Aorta (tissue), 5 donors: ENCODE measurements at regions of chr11 and their contacts with region 1.

Region 1: GRCh38 chr11:108497317-108498045 is 703 bp downstream of the POGLUT3 start:
- DNase-seq: peak; percentile 95
- ATAC-seq: peak; percentile 95
- H3K4me3 ChIP-seq: peak overlapping the region; percentile 63
- H3K27ac ChIP-seq: peak overlapping the region; percentile 90 to 96
- H3K4me1 ChIP-seq: peaks cover 0 to 2% of the 10 kb centered on the region in 2 donors
- H3K27me3 ChIP-seq: no peaks in the 10 kb centered on the region

Region 2: GRCh38 chr11:108222686-108223448 is 274.6 kb before region 1 on chr11 and contains the start of gene ATM:
- intact Hi-C with region 1: loop called in 1 of 2 experiments (anchors 10 kb)
- DNase-seq: peak; percentile 100
- ATAC-seq: peak; percentile 99
- H3K4me3 ChIP-seq: peak within 1 kb of the TSS; percentile 77 to 94
- H3K27ac ChIP-seq: peak within 1 kb of the TSS; percentile 67 to 95
- H3K4me1 ChIP-seq: peaks cover 2 to 13% of the 10 kb centered on the region in 2 donors
- H3K27me3 ChIP-seq: no peaks in the 10 kb centered on the region
- total RNA-seq, gene ATM: 66.3 to 123 TPM

Region 3: DNA sequence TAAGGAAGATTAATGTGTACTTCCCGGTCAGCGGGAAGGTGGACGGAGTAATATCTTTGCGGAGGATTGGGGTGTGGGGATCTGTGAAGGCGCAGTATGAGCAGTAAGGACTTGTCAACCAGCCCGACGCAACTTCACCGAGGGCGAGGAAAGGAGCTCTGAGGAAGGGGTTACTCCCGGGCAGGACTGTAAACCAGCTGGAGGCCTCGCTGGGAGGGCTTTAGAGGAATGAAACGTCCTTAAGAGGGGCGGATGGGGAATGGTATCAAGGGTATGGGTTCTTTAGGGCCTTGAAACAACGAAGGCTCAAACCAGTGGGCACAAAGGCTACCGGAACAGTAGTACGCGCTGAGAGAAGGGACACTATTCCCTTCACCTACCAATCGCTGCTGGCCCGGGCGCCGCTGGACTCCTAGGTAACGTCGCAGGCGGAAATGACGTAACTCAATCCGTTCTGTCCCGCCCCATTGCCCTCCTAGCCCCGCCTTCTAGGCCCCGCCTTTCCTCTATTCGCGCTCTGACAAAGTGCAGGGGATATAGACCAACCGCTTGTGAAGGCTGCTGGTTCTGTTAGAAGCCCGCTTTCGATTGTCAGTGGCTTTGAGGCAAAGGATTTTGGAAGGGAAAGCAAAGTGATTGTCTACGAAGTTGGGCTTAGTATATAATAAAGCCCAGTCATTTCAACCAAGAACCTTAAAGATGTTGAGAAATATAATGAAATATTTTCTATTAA is 30.2 kb before region 1 on chr11 and contains the start of gene C11orf65:
- intact Hi-C with region 1: loop called in 1 of 2 experiments (anchors 2 kb)
- DNase-seq: peak; percentile 96 to 98
- ATAC-seq: peak; percentile 100
- H3K4me3 ChIP-seq: peak within 1 kb of the TSS; percentile 22 to 41
- H3K27ac ChIP-seq: peak within 1 kb of the TSS; percentile 91 to 94
- H3K4me1 ChIP-seq: peaks cover 0 to 2% of the 10 kb centered on the region in 2 donors
- H3K27me3 ChIP-seq: no peaks in the 10 kb centered on the region
- total RNA-seq, gene C11orf65: 0.36 TPM in 1 of 2 donors, not detected in the other

Region 4: GRCh38 chr11:108593214-108593922 is 95.9 kb after region 1 on chr11 and contains the start of gene EXPH5:
- intact Hi-C with region 1: loop called in 1 of 2 experiments (anchors 5 kb)
- DNase-seq: peak; percentile 85 to 94
- ATAC-seq: peak; percentile 93
- H3K4me3 ChIP-seq: peak within 1 kb of the TSS; percentile 72 to 79
- H3K27ac ChIP-seq: no peak within 1 kb of the TSS
- H3K4me1 ChIP-seq: no peaks in the 10 kb centered on the region
- H3K27me3 ChIP-seq: no peaks in the 10 kb centered on the region
- total RNA-seq, gene EXPH5: 1.8 to 4.5 TPM

Region 5: DNA sequence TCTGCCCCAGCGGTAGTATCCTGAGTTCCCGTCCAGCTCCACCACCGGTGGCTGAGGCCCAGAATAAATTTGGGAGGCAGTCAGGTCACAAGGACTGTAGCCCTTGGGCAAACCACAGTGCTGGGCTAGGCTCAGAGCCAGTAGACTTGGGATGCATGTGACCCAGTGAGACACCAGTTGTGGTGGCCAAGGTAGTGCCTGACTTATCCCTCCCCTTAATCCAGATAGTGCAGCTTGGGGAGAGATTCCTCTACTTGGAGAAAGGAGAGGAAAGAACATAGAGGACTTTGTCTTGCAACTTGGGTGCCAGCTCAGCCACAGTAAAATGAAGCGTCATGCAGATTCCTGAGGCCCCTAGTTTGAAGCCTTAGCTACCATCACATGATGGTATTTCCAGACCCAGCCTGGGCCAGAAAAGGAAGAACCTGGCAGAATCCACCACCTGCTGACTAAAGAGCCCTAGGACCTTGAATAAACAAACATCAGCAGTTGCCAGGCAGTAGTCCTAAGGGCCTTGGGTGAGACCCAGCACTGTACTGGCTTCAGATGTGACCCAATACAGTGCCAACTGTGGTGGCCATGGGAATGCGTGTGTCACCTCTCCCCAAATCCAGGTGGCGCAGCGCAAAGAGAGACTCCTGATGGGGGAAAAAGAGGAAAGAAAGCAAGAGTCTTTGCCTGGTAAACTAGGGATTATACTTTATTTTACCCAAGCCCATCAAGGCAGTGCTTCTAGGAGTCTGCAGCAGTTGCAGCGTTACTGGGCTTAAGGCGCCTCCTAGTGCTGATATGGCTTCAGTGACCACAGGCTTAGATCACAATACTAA is 150.4 kb after region 1 on chr11:
- intact Hi-C with region 1: loop called in 1 of 2 experiments (anchors 5 kb)
- DNase-seq: peak in 1 of 2 donors; percentile 71
- ATAC-seq: peak; percentile 86
- H3K4me3 ChIP-seq: no peak overlapping the region
- H3K27ac ChIP-seq: no peak overlapping the region
- H3K4me1 ChIP-seq: peaks cover 0 to 3% of the 10 kb centered on the region in 2 donors
- H3K27me3 ChIP-seq: no peaks in the 10 kb centered on the region